Ovary (tissue), 10 donors: ENCODE measurements at regions of chr21 and their contacts with region 1.

Region 1: GRCh38 chr21:42991992-42992740 is 17.8 kb downstream of the PKNOX1 start:
- DNase-seq: peak; percentile 73 to 85 (median 82)
- H3K4me3 ChIP-seq: no peak overlapping the region
- H3K27ac ChIP-seq: no peak overlapping the region
- H3K4me1 ChIP-seq: peaks cover 8% of the 10 kb centered on the region
- H3K27me3 ChIP-seq: no peaks in the 10 kb centered on the region
- CTCF ChIP-seq: no peak
- EP300 ChIP-seq: no peak
- POLR2A ChIP-seq: no peak

Region 2: GRCh38 chr21:41121785-41122421 is 1870.3 kb before region 1 on chr21:
- intact Hi-C with region 1: no loop called
- DNase-seq: peak; percentile 21 to 77 (median 64)
- H3K4me3 ChIP-seq: no peak overlapping the region
- H3K27ac ChIP-seq: no peak overlapping the region
- H3K4me1 ChIP-seq: no peaks in the 10 kb centered on the region
- H3K27me3 ChIP-seq: no peaks in the 10 kb centered on the region
- CTCF ChIP-seq: peak in 2 of 3 donors; percentile 26 to 30
- EP300 ChIP-seq: no peak
- POLR2A ChIP-seq: no peak

Region 3: GRCh38 chr21:43262427-43262826 is 270.3 kb after region 1 on chr21:
- intact Hi-C with region 1: no loop called
- DNase-seq: peak in 2 of 5 donors; percentile 10 to 38
- H3K4me3 ChIP-seq: no peak overlapping the region
- H3K27ac ChIP-seq: no peak overlapping the region
- H3K4me1 ChIP-seq: no peaks in the 10 kb centered on the region
- H3K27me3 ChIP-seq: no peaks in the 10 kb centered on the region
- CTCF ChIP-seq: no peak
- EP300 ChIP-seq: no peak
- POLR2A ChIP-seq: no peak

Region 4: GRCh38 chr21:43719748-43720538 is 727.8 kb after region 1 on chr21:
- intact Hi-C with region 1: loop called in 1 of 4 experiments (anchors 5 kb)
- DNase-seq: peak in 2 of 5 donors; percentile 37 to 63
- H3K4me3 ChIP-seq: peak overlapping the region; percentile 67
- H3K27ac ChIP-seq: peak overlapping the region; percentile 75 to 79
- H3K4me1 ChIP-seq: peaks cover 20% of the 10 kb centered on the region
- H3K27me3 ChIP-seq: no peaks in the 10 kb centered on the region
- CTCF ChIP-seq: no peak
- EP300 ChIP-seq: no peak
- POLR2A ChIP-seq: no peak